ENCODE measurements at regions of chr6 and their contacts with region 1.

Region 1: GRCh38 chr6:83514866-83515466 is 2.6 kb downstream of the PRSS35 start:
- DNase-seq: peak; percentile 62
- H3K4me3 ChIP-seq: no peak overlapping the region
- CTCF ChIP-seq: peak; percentile 75

Region 2: GRCh38 chr6:83221889-83222479 is 293.0 kb before region 1 on chr6:
- in situ Hi-C with region 1: loop called (anchors 5 kb)
- DNase-seq: peak; percentile 37
- H3K4me3 ChIP-seq: no peak overlapping the region
- CTCF ChIP-seq: peak; percentile 19

Region 3: DNA sequence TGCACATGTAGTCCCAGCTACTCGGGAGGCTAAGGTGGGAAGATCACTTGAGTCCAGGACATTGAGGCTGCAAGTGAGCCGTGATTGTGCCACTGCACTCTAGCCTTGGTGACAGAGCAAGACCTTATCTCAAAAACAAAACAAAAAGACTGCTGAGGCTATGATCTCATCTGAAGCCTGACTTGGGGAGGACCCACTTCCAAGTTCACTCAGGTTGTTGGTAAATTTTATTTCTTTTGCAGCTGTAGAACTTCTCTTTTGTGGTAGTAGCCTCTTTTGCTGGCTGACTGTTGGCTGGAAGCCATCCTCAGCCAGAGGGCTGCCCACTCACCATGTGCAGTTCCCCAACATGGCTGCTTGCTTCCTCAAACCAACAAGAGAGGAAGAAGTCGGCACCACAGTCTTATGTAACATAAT is 47.3 kb before region 1 on chr6:
- in situ Hi-C with region 1: loop called (anchors 5 kb)
- DNase-seq: no peak
- H3K4me3 ChIP-seq: no peak overlapping the region
- CTCF ChIP-seq: no peak

Region 4: DNA sequence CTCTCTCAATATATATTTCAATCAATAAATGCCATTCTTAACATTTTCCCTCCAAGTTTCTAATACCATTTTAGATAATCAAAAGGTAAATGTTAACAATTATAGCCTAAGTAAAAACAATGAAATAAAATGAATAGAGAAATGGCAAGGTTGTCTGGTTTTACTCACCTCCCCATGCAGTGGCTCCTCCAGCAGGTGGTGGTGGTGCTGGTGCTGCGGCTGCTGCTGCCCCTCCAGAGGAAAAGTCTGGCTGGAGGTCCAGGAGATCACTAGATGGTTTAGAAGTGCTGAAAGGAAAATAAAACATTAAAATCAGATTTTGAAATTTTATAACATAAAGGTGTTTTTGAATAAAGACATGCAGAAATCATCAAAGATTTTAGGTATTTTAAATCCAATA is 90.6 kb after region 1 on chr6:
- in situ Hi-C with region 1: no loop called
- DNase-seq: no peak
- H3K4me3 ChIP-seq: no peak overlapping the region
- CTCF ChIP-seq: no peak

Measured in astrocyte of the cerebellum (primary cell).